GM12878 (cell line): ENCODE measurements at regions of chr3 and their contacts with region 1.

Region 1: GRCh38 chr3:27528791-27529190 is 44.6 kb upstream of the SLC4A7 start:
- DNase-seq: no peak
- ATAC-seq: no peak
- H3K4me3 ChIP-seq: no peak overlapping the region
- H3K27ac ChIP-seq: no peak overlapping the region
- H3K4me1 ChIP-seq: peaks cover 2% of the 10 kb centered on the region
- H3K27me3 ChIP-seq: no peaks in the 10 kb centered on the region
- CTCF ChIP-seq: no peak
- EP300 ChIP-seq: no peak
- POLR2A ChIP-seq: no peak
- RAD21 ChIP-seq: no peak

Region 2: DNA sequence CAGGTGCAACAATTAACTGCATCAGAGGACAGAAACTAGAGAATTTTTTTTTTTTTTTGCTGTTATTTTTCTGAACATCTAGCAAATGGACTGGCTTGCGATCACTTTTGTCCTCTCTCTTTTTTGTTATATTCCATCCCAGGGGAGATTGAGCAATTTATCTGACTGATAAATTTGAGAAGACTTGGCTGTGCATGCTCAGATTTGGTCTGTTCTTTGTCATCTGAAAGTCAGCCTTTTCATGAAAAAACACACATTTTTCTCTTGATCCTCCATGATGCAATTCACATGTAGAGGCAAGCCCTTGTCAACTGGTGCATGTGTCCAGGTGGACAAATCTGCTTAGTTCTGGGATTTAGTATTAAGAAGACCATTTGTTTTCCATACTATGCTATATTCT is 596.9 kb before region 1 on chr3:
- CTCF ChIA-PET with region 1: no interaction called
- POLR2A ChIA-PET with region 1: no interaction called
- RAD21 ChIA-PET with region 1: no interaction called
- SMC1A ChIA-PET with region 1: no interaction called
- in situ Hi-C with region 1: no loop called
- intact Hi-C with region 1: no loop called
- DNase-seq: no peak
- ATAC-seq: no peak
- H3K4me3 ChIP-seq: no peak overlapping the region
- H3K27ac ChIP-seq: no peak overlapping the region
- H3K4me1 ChIP-seq: no peaks in the 10 kb centered on the region
- H3K27me3 ChIP-seq: no peaks in the 10 kb centered on the region
- CTCF ChIP-seq: no peak
- EP300 ChIP-seq: no peak
- POLR2A ChIP-seq: no peak
- RAD21 ChIP-seq: no peak

Region 3: GRCh38 chr3:27596334-27596841 is 67.6 kb after region 1 on chr3:
- CTCF ChIA-PET with region 1: no interaction called
- POLR2A ChIA-PET with region 1: no interaction called
- RAD21 ChIA-PET with region 1: interaction called, 3 read pairs
- SMC1A ChIA-PET with region 1: no interaction called
- in situ Hi-C with region 1: no loop called
- intact Hi-C with region 1: loop called (anchors 5 kb)
- DNase-seq: peak; percentile 56
- ATAC-seq: peak; percentile 84
- H3K4me3 ChIP-seq: no peak overlapping the region
- H3K27ac ChIP-seq: no peak overlapping the region
- H3K4me1 ChIP-seq: peaks cover 18% of the 10 kb centered on the region
- H3K27me3 ChIP-seq: no peaks in the 10 kb centered on the region; a peak in 1 of 4 replicates
- CTCF ChIP-seq: peak in 1 of 3 experiments; percentile 11; a peak in 1 of 6 replicates
- EP300 ChIP-seq: 0 out of 4 replicates have a peak, but pooled peaks of 1 of the 2 experiments have one; percentile 15
- POLR2A ChIP-seq: no peak
- RAD21 ChIP-seq: peak; percentile 23; the same call in 1 of the 2 replicates

Region 4: GRCh38 chr3:27752926-27753325 is 224.1 kb after region 1 on chr3:
- CTCF ChIA-PET with region 1: no interaction called
- POLR2A ChIA-PET with region 1: no interaction called
- RAD21 ChIA-PET with region 1: no interaction called
- SMC1A ChIA-PET with region 1: no interaction called
- in situ Hi-C with region 1: no loop called
- intact Hi-C with region 1: no loop called
- DNase-seq: no peak
- ATAC-seq: peak; percentile 53
- H3K4me3 ChIP-seq: no peak overlapping the region
- H3K27ac ChIP-seq: no peak overlapping the region
- H3K4me1 ChIP-seq: no peaks in the 10 kb centered on the region
- H3K27me3 ChIP-seq: no peaks in the 10 kb centered on the region
- CTCF ChIP-seq: no peak
- EP300 ChIP-seq: no peak
- POLR2A ChIP-seq: no peak
- RAD21 ChIP-seq: no peak